GM12878 (cell line): ENCODE measurements at regions of chr5 and their contacts with region 1.

Region 1: DNA sequence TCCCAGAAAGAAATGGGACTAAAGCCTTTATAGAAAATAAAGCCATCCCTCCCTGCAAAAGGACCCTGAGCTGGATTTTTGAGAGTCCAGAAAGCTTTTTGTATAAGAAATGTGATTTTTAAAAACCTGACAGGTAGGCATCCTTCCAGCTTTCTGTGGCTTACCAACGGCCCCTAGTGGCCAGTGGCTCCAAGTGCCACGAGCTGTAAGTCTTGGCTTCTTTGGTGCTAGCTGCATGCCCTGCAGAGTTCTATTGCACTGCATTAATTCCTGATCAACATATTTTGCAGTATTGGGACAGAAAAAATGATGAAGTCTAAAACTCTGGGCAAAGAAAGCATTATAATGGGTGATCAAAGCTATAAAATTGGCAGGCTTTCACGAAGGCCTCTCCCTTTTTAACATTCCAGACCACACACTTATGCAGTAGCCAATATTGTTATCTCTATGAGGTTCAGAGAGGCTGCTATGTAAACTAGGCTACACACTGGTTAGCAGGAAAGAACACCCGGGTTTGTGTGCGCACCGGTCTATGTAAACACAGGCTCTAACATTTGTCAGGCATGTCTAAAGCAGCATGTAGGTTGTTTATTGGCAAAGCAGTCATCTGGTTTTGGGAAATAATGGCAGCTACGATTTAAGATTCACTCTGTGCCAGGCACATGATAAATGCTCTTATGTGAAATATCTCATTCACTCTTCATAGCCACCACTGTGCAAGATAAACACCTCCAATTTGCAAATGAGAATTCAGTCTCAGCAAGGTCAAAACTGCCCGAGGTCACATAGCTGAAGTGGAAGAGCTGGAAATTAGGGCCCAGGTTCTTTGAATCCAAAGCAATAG is 55.2 kb downstream of the NMUR2 start:
- DNase-seq: no peak
- ATAC-seq: peak; percentile 92
- H3K4me3 ChIP-seq: no peak overlapping the region
- H3K27ac ChIP-seq: no peak overlapping the region
- H3K4me1 ChIP-seq: no peaks in the 10 kb centered on the region
- H3K27me3 ChIP-seq: no peaks in the 10 kb centered on the region
- CTCF ChIP-seq: peak; percentile 82 to 92 (median 90)
- EP300 ChIP-seq: no peak
- POLR2A ChIP-seq: no peak
- RAD21 ChIP-seq: peak; percentile 69

Region 2: GRCh38 chr5:152335461-152335860 is 14.4 kb before region 1 on chr5:
- CTCF ChIA-PET with region 1: interaction called, 10 read pairs
- POLR2A ChIA-PET with region 1: no interaction called
- RAD21 ChIA-PET with region 1: no interaction called
- SMC1A ChIA-PET with region 1: interaction called, 4 read pairs
- in situ Hi-C with region 1: no loop called
- intact Hi-C with region 1: no loop called
- DNase-seq: no peak
- ATAC-seq: peak; percentile 21; the same call in 1 of the 3 replicates
- H3K4me3 ChIP-seq: no peak overlapping the region
- H3K27ac ChIP-seq: no peak overlapping the region
- H3K4me1 ChIP-seq: no peaks in the 10 kb centered on the region
- H3K27me3 ChIP-seq: no peaks in the 10 kb centered on the region
- CTCF ChIP-seq: no peak
- EP300 ChIP-seq: no peak
- POLR2A ChIP-seq: no peak
- RAD21 ChIP-seq: no peak

Region 3: DNA sequence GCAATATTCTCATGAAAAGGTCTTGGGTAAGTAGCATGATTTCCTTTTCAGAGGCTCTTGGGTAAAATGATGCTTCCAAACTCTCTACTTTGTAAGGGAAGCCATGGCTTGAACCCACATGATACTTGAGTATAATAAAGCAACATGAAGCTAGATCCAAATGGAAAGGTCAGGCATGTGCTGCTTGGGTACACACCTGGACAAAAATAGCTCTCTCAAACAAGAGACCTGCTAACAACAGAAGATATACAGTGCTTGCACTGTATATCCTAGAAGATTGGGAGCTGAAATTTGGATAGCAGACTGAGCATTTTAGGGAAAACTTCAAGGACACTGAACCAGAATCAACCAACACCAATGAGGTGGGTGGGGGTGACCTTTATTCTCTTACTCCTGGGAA is 15.0 kb after region 1 on chr5:
- CTCF ChIA-PET with region 1: interaction called, 11 read pairs
- POLR2A ChIA-PET with region 1: no interaction called
- RAD21 ChIA-PET with region 1: no interaction called
- SMC1A ChIA-PET with region 1: interaction called, 4 read pairs
- in situ Hi-C with region 1: no loop called
- intact Hi-C with region 1: no loop called
- DNase-seq: no peak
- ATAC-seq: no peak
- H3K4me3 ChIP-seq: no peak overlapping the region
- H3K27ac ChIP-seq: no peak overlapping the region
- H3K4me1 ChIP-seq: no peaks in the 10 kb centered on the region
- H3K27me3 ChIP-seq: no peaks in the 10 kb centered on the region
- CTCF ChIP-seq: no peak
- EP300 ChIP-seq: no peak
- POLR2A ChIP-seq: no peak
- RAD21 ChIP-seq: no peak